PC-9 (cell line): ENCODE measurements at regions of chr13 and their contacts with region 1.

Region 1: DNA sequence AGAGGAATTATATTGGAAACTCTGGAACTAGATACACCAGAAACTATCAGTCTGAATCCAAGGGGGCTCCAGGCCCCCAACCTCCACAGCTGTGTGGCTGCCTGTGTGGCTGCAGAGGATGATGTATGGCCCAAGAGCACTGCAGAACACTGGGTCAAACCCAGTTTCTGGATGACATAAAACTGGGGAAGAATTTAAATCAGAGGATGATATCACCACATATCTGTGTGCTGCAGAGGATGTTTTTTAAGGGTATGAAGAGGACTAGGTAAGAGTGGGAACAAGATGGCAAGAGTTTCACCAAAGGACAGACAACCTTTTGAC is 226.4 kb downstream of the SUCLA2 start:
- DNase-seq: no peak
- H3K4me3 ChIP-seq: no peak overlapping the region
- H3K27ac ChIP-seq: no peak overlapping the region
- H3K4me1 ChIP-seq: no peaks in the 10 kb centered on the region
- H3K27me3 ChIP-seq: no peaks in the 10 kb centered on the region
- CTCF ChIP-seq: no peak

Region 2: DNA sequence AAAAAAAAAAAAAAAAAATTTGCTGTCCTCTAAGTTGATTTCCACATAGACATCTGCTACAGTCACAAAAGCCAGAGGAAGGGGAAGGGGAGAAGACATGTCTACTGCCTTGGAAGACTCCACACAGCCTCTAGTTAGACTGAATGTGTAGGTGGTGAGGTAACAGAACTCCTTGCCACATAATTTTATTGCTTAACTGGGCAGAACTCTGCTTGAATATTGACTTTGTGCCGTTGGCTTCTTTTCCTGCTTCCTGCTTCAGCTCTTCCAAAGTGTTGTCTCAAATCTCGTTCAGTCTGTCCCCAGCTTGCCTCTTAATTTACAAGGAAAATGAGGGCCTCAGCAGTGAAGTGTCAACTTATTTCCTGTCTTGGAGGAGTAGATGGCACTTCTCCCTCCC is 1014.8 kb before region 1 on chr13:
- CTCF ChIA-PET with region 1: no interaction called
- POLR2A ChIA-PET with region 1: no interaction called
- intact Hi-C with region 1: loop called (anchors 10 kb)
- DNase-seq: no peak
- H3K4me3 ChIP-seq: no peak overlapping the region
- H3K27ac ChIP-seq: no peak overlapping the region
- H3K4me1 ChIP-seq: peaks cover 7% of the 10 kb centered on the region; the same call in 1 of the 2 replicates
- H3K27me3 ChIP-seq: no peaks in the 10 kb centered on the region
- CTCF ChIP-seq: no peak

Region 3: GRCh38 chr13:46831588-46832194 is 942.9 kb before region 1 on chr13:
- CTCF ChIA-PET with region 1: no interaction called
- POLR2A ChIA-PET with region 1: no interaction called
- intact Hi-C with region 1: loop called (anchors 5 kb)
- DNase-seq: peak in 1 of 2 experiments; percentile 26
- H3K4me3 ChIP-seq: no peak overlapping the region
- H3K27ac ChIP-seq: no peak overlapping the region
- H3K4me1 ChIP-seq: no peaks in the 10 kb centered on the region
- H3K27me3 ChIP-seq: no peaks in the 10 kb centered on the region
- CTCF ChIP-seq: peak; percentile 93

Region 4: DNA sequence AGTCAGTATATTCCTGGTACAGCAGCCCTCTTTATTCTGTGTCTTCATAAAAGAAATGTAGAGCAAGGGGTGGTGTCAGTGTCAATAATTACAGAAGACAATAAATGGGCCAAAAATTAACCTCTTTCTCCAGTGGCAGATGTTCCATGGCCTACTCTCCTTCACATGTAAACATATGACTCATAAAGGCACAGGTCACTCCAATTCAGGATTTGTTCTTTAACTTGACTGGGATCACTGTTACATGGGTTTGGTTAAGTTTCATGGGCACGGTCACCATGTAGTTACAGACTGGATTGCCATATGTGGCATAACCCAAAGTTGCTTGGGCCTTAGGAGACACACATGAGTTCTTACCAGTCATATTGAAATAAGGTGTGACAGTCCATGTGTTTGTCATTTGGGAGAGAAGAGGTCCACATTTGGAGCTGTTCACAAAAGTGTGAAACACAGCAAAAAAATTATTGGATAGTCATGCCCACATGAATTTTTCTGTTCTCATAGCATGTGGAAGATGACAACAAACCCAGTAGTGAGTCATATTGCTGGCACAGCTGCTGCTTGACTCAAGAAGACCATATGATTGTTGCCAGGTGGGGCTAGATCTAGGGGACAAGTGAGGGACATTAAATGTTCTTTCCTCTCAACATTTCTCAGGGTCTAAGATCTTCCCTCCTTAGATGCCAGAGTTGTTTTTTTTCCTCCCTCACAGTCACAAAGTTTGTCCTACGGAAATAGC is 809.7 kb before region 1 on chr13:
- CTCF ChIA-PET with region 1: no interaction called
- POLR2A ChIA-PET with region 1: no interaction called
- intact Hi-C with region 1: loop called (anchors 5 kb)
- DNase-seq: no peak
- H3K4me3 ChIP-seq: no peak overlapping the region
- H3K27ac ChIP-seq: no peak overlapping the region
- H3K4me1 ChIP-seq: peaks cover 6% of the 10 kb centered on the region; the same call in 1 of the 2 replicates
- H3K27me3 ChIP-seq: no peaks in the 10 kb centered on the region
- CTCF ChIP-seq: no peak

Region 5: DNA sequence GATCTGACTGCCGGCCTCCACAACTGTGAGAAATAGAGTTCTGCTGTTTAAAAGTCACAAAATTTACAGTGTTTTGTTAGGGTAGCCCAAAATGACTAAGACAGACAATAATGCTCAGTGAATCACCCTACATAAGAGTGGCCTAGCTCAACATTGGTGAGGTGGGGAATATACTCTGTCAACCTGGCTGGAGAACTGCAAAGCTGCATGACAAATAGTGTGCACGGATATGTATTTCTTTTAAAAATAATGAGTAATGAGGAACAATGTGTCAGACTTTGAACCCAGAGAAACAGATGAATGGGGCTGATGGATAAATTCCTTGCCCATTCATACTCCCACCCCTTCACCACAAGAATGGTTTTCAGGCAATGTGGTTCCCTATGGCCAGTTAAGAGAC is 146.0 kb before region 1 on chr13:
- CTCF ChIA-PET with region 1: no interaction called
- POLR2A ChIA-PET with region 1: no interaction called
- intact Hi-C with region 1: no loop called
- DNase-seq: no peak
- H3K4me3 ChIP-seq: no peak overlapping the region
- H3K27ac ChIP-seq: no peak overlapping the region
- H3K4me1 ChIP-seq: no peaks in the 10 kb centered on the region
- H3K27me3 ChIP-seq: no peaks in the 10 kb centered on the region
- CTCF ChIP-seq: no peak

Region 6: GRCh38 chr13:47650209-47650608 is 124.4 kb before region 1 on chr13:
- CTCF ChIA-PET with region 1: no interaction called
- POLR2A ChIA-PET with region 1: no interaction called
- intact Hi-C with region 1: no loop called
- DNase-seq: no peak
- H3K4me3 ChIP-seq: no peak overlapping the region
- H3K27ac ChIP-seq: no peak overlapping the region
- H3K4me1 ChIP-seq: no peaks in the 10 kb centered on the region
- H3K27me3 ChIP-seq: no peaks in the 10 kb centered on the region
- CTCF ChIP-seq: no peak